HCT116 (cell line): ENCODE measurements at regions of chr2 and their contacts with region 1.

Region 1: GRCh38 chr2:97697252-97698235 is 15.8 kb upstream of the ZAP70 start:
- DNase-seq: peak; percentile 71
- ATAC-seq: peak; percentile 85
- H3K4me3 ChIP-seq: no peak overlapping the region
- H3K27ac ChIP-seq: no peak overlapping the region
- H3K4me1 ChIP-seq: peaks cover 0 to 5% of the 10 kb centered on the region in 2 experiments; a peak in 1 of 4 replicates
- H3K27me3 ChIP-seq: no peaks in the 10 kb centered on the region
- CTCF ChIP-seq: peak; percentile 85 to 99 (median 92)
- POLR2A ChIP-seq: no peak
- RAD21 ChIP-seq: peak; percentile 100

Region 2: GRCh38 chr2:97663965-97664635 is 33.4 kb before region 1 on chr2 and contains the start of gene ACTR1B:
- CTCF ChIA-PET with region 1: interaction called, 7 read pairs
- POLR2A ChIA-PET with region 1: interaction called, 5 read pairs
- RAD21 ChIA-PET with region 1: interaction called, 3 read pairs
- intact Hi-C with region 1: loop called (anchors 1 kb)
- DNase-seq: peak; percentile 96
- ATAC-seq: peak; percentile 86
- H3K4me3 ChIP-seq: peak within 1 kb of the TSS; percentile 83 to 88
- H3K27ac ChIP-seq: peak within 1 kb of the TSS; percentile 92
- H3K4me1 ChIP-seq: peaks cover 6 to 20% of the 10 kb centered on the region in 2 experiments; a peak in 3 of 4 replicates
- H3K27me3 ChIP-seq: no peaks in the 10 kb centered on the region
- CTCF ChIP-seq: peak; percentile 59 to 75 (median 59); a peak in 5 of 6 replicates
- POLR2A ChIP-seq: peak; percentile 5
- RAD21 ChIP-seq: no peak
- total RNA-seq, gene ACTR1B: 42.8 TPM

Region 3: DNA sequence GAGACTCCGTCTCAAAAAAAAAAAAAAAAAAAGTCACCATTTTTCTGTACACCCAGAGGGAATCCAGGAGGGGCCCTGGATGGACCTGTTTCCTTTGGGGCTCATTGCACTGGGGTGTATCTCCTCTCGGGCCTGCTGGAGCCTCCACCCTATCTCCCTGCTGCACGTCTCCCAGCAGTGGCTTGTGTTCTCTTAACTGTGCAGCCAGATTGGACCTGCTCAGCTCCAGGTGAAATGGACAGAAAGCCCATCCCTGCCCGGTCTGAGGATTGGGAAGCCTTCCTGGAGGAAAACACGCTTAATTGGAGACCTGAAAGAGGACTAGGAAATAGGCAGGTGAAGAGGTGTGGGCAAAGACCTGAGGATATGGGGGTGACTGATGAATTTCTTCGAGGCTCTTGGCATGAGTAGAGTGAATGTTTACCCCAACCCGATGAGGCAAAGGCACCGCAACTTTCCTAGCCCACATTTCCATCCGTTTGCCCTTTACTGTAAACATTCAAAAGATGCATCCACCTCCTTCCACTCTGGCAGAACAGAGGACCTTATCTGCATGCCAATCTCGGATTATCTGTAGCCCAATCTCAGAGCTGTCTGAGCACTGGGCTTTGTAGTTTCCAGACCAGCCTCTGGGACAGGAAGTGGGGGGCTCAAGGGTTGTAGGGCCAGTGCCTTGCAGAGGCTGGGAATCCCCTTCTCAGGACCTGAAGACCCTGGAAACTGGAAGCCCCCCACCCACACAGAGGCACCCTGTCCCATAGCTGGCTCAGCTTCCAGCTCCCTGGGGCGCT is 13.2 kb after region 1 on chr2:
- CTCF ChIA-PET with region 1: interaction called, 27 read pairs
- POLR2A ChIA-PET with region 1: interaction called, 5 read pairs
- RAD21 ChIA-PET with region 1: no interaction called
- intact Hi-C with region 1: no loop called
- DNase-seq: no peak
- ATAC-seq: no peak
- H3K4me3 ChIP-seq: no peak overlapping the region
- H3K27ac ChIP-seq: no peak overlapping the region
- H3K4me1 ChIP-seq: peaks cover 0 to 6% of the 10 kb centered on the region in 2 experiments; a peak in 2 of 4 replicates
- H3K27me3 ChIP-seq: no peaks in the 10 kb centered on the region
- CTCF ChIP-seq: no peak
- POLR2A ChIP-seq: no peak
- RAD21 ChIP-seq: no peak